AG04450 (cell line): ENCODE measurements at regions of chr13 and their contacts with region 1.

Region 1: DNA sequence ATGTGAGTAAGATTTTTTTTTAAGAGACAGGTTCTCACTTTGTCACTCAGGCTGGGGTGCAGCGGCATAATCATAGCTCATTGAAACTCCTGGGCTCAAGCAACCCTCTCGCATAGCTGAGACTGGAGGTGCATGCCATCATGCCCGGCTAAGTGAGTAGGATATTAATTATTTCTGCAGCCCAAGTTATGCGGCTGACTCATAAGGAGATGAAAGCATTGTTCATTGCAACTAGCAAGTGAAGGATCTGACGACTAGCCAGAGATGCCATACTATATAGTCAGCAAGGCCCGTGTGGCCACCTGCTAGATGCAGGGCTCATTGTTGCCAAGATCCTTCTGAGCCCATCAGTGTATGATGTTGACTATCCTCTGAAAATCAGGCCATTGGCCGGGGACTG is 45.2 kb downstream of the ABCC4 start:
- DNase-seq: peak; percentile 90
- H3K4me3 ChIP-seq: no peak overlapping the region
- H3K27ac ChIP-seq: peak overlapping the region; percentile 83
- H3K27me3 ChIP-seq: no peaks in the 10 kb centered on the region
- CTCF ChIP-seq: no peak

Region 2: DNA sequence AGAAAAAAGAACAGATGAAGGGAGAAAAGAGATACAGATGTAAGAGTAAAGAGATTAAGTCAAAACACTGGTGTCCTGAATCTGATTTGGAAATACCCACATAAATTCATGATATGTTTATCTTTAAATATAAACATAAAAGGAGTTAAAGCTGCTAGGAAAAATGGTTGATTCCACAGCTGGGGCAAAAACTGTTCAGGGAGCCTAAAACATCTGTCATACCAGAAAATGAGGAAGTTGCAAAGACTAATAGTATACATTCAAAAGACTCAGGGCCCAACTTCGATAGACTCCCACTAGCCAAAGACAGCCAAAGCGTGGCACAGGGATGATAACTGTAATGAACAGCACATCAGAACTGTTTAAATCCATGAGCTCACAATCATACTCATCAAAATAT is 16.8 kb before region 1 on chr13:
- CTCF ChIA-PET with region 1: no interaction called
- POLR2A ChIA-PET with region 1: interaction called, 15 read pairs
- DNase-seq: peak; percentile 58
- H3K4me3 ChIP-seq: no peak overlapping the region
- H3K27ac ChIP-seq: no peak overlapping the region
- H3K27me3 ChIP-seq: no peaks in the 10 kb centered on the region
- CTCF ChIP-seq: no peak

Region 3: DNA sequence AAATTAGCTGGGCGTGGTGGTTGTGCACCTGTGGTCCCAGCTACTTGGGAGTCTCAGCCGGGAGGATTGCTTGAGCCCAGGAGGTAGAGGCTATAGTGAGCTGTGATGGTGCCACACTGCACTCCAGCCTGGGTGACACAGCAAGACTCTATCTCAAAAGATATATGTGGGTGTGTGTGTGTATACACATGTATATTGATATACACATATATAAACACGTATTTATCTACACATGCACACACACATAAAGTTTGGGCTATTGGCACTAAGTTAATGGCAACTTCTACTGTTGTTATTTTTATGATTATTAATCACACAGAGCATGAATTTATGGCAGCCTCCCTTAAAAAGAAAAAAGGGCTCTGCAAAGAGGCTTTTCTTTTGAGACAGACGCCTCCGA is 72.3 kb after region 1 on chr13:
- CTCF ChIA-PET with region 1: no interaction called
- POLR2A ChIA-PET with region 1: no interaction called
- DNase-seq: no peak
- H3K4me3 ChIP-seq: no peak overlapping the region
- H3K27ac ChIP-seq: no peak overlapping the region
- H3K27me3 ChIP-seq: peaks cover 12% of the 10 kb centered on the region
- CTCF ChIP-seq: no peak